ENCODE measurements at regions of chr11 and their contacts with region 1.

Region 1: DNA sequence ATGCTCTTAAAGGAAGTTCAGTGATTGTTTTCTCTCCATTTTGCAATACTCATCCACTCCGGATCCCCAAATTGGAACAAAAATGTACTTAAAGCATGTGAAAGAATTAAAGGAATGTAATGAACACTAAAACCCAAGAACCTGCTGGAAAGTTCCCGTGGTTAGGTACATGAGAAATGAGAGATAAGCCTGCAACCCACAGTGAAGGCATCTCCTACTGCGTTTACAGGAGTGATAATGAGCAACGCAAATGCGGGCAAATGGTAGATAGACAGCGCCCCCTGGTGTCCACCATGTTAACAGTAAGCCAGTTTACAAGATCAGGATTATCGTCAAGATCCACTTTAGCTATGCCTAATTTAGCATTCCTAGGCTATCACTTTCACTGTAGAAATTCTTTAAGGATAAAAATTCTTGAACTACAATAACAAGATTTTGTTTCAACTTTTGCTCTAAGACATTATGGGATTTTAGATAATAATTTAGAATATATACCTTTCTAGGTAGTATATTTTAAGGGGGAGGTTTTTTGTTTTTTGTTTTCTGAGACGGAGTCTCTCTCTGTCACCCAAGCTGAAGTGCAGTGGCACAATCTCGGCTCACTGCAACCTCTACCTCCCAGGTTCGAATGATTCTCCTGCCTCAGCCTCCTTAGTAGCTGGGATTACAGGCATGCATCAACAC is 29.9 kb downstream of the ALG9 start:
- DNase-seq: peak; percentile 95
- ATAC-seq: peak; percentile 94

Region 2: DNA sequence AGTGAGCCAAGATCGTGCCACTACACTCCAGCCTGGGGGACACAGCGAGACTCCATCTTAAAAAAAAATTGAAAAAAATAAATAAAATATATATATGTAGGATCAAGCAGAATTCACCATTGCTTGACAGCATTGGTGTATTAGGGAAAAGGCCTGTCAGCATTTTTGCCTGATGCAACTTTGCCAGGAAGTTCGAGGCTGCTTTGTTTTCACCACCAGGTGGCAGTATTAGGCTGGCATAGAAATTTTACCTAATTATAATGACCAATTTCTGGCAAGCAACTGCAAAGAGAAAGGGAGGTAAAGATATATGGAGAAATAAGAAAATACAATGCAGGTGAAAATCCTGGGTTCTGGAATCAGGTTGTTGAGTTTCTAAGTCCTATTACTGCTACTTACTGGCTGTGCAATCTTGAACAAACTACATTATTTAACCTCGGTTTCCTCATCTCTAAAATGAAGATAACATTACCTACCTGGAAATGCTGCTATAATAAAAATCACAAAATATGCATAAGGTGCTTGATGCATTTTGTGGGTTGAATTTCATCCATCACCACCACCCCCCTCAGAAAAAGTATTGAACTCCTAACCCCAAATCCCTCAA is 276.3 kb before region 1 on chr11:
- intact Hi-C with region 1: loop called (anchors 10 kb)
- DNase-seq: peak; percentile 81
- ATAC-seq: peak; percentile 61

Region 3: DNA sequence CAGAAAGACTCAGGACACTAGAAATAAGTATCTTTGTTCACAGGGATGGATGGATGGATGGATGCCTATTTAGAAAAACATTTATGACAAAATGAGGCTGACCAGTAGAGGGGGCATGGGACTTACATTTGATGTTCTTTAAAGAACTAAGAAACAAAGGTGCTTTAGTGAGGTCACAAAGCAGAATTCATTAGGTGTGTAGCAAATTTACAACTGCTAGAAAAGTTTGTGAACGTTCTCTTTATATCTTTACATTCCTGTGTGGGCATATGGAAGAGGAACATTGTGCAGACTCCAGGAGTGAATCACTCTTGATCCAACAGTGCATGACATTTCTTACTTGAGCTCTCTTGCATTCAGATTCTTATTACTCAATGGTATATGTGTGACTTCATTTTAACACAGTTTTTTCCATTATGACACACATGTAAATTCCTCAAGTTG is 255.1 kb before region 1 on chr11:
- intact Hi-C with region 1: no loop called
- DNase-seq: no peak
- ATAC-seq: no peak

Region 4: GRCh38 chr11:111788051-111788450 is 53.5 kb before region 1 on chr11:
- intact Hi-C with region 1: loop called (anchors 10 kb)
- DNase-seq: no peak
- ATAC-seq: no peak